ENCODE measurements at regions of chr18 and their contacts with region 1.

Region 1: DNA sequence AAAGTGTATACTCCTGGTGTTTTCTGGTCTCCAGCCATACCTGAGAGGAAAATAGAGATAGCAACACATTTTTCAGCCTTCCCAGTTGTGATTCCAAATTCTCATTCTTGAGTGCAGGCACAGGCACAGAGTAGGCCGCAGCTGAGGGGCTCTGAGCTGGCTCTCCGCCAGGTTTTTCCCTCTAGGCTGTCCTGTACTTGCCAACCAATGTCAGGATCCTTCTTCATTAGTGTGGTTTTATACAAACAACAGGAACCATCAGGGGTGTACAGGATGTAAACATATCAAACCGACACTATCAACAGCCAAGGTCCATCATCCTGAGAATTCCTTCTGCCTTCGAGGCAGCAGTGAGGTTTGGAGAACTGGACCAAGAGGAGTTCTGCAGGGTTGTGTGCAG is 1733.6 kb upstream of the CELF4 start:
- DNase-seq: no peak
- ATAC-seq: no peak
- H3K4me3 ChIP-seq: no peak overlapping the region
- H3K27ac ChIP-seq: no peak overlapping the region
- H3K4me1 ChIP-seq: no peaks in the 10 kb centered on the region
- H3K27me3 ChIP-seq: no peaks in the 10 kb centered on the region
- CTCF ChIP-seq: no peak

Region 2: GRCh38 chr18:39276764-39277163 is 22.4 kb before region 1 on chr18:
- intact Hi-C with region 1: loop called in 1 of 10 experiments (anchors 2 kb)
- DNase-seq: no peak
- ATAC-seq: no peak
- H3K4me3 ChIP-seq: no peak overlapping the region
- H3K27ac ChIP-seq: no peak overlapping the region
- H3K4me1 ChIP-seq: no peaks in the 10 kb centered on the region
- H3K27me3 ChIP-seq: no peaks in the 10 kb centered on the region
- CTCF ChIP-seq: no peak

Region 3: DNA sequence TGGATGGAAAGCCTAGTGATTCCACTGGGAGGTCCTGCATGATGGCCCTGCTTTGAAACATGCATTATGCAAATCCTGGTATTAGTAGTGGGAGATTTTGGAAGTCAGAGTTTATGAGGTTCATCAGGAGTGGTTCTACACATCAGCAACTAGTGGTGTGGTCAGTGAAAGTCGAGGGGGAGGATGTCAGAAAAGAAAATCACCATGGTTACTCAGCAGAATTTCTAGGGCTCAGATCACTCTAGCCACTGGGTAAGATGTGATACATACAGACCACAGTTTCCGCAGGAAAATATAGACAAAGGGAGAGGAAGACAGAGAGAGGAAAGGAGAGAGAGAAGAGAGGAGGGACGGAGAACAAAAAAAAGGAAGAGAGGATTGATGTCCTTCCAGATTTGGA is 555.1 kb after region 1 on chr18:
- intact Hi-C with region 1: no loop called
- DNase-seq: no peak
- ATAC-seq: no peak
- H3K4me3 ChIP-seq: no peak overlapping the region
- H3K27ac ChIP-seq: no peak overlapping the region
- H3K4me1 ChIP-seq: no peaks in the 10 kb centered on the region
- H3K27me3 ChIP-seq: no peaks in the 10 kb centered on the region
- CTCF ChIP-seq: no peak